ENCODE measurements at regions of chr15 and their contacts with region 1.

Region 1: GRCh38 chr15:42736793-42737528 is at the start of gene CDAN1:
- DNase-seq: peak; percentile 94
- H3K4me3 Mint-ChIP-seq: peak within 1 kb of the TSS; percentile 73
- H3K27ac Mint-ChIP-seq: peak within 1 kb of the TSS; percentile 69
- H3K4me1 Mint-ChIP-seq: peaks cover 20% of the 10 kb centered on the region
- H3K27me3 Mint-ChIP-seq: no peaks in the 10 kb centered on the region
- total RNA-seq, gene CDAN1: 22.1 to 26.2 TPM

Region 2: DNA sequence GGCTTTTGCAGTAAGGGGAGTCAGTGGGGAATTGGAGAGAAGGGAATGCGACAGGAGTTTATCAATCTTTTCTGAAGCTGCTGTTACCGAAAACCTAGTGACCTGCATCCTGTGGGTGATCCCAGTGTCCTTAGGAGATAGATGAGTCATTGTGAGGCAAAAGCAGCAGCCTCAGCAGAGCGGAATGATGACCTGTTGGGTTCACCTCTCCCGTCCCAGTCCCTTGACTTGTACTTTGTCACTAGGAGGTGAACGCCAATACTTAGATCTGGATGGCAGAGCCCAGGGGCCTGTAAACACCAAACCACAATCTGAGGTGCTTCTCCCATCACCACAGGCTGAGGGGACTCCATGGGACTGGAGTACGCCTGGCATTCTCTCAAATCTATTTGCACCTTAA is 17.9 kb before region 1 on chr15:
- CTCF ChIA-PET with region 1: no interaction called
- POLR2A ChIA-PET with region 1: interaction called, 12 read pairs
- DNase-seq: no peak
- H3K4me3 Mint-ChIP-seq: no peak overlapping the region
- H3K27ac Mint-ChIP-seq: no peak overlapping the region
- H3K4me1 Mint-ChIP-seq: no peaks in the 10 kb centered on the region
- H3K27me3 Mint-ChIP-seq: no peaks in the 10 kb centered on the region

Region 3: DNA sequence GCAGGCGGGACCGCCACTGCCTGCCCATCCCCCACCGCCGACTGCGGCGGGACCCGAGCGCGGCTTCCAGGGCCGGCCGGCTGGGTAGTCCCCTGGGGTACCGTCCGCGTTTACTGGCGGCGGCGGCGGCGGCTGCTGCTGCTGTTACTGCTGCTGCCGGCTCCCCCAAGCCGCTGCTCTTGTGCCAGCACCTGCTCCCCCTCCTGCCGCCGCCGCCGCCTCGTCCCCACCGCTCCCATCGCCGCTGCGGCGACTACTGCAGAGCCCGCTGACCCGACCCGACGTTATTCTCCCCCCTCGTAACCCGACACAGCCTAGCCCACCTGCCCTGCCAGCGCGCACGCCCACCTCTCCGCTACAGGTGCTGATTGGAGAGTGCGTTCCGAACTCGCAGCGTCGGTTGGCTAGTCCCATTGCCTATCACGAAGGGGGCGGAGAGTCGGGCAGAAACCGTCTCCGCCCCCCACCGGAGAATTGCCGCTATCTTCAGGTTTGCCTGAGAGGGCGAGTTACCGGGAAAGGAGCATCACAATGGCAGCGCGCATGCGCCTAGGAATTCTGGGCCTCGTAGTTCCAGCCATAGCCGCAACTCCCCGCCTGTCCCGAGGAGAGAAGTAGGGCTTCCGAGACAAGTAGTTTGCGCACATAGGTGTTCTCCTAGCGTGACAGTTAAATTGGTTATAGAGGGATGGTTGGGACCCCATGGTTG is 183.7 kb after region 1 on chr15 and contains the start of gene TTBK2:
- CTCF ChIA-PET with region 1: interaction called, 14 read pairs
- POLR2A ChIA-PET with region 1: interaction called, 10 read pairs
- DNase-seq: peak; percentile 97
- H3K4me3 Mint-ChIP-seq: peak within 1 kb of the TSS; percentile 92
- H3K27ac Mint-ChIP-seq: peak within 1 kb of the TSS; percentile 83
- H3K4me1 Mint-ChIP-seq: peaks cover 35% of the 10 kb centered on the region
- H3K27me3 Mint-ChIP-seq: no peaks in the 10 kb centered on the region
- total RNA-seq, gene TTBK2: 14.6 to 18.6 TPM

Region 4: GRCh38 chr15:42994546-42994945 is 257.6 kb after region 1 on chr15:
- CTCF ChIA-PET with region 1: no interaction called
- POLR2A ChIA-PET with region 1: no interaction called
- DNase-seq: no peak
- H3K4me3 Mint-ChIP-seq: no peak overlapping the region
- H3K27ac Mint-ChIP-seq: no peak overlapping the region
- H3K4me1 Mint-ChIP-seq: peaks cover 3% of the 10 kb centered on the region
- H3K27me3 Mint-ChIP-seq: no peaks in the 10 kb centered on the region

Measured in activated CD4-positive, alpha-beta memory T cell treated with anti-CD3 and anti-CD28 coated beads, Interleukin-2, amount 10 ng/mL, durations not matched to agents 7 days and 5 days (primary cell).